CD8-positive, alpha-beta memory T cell (primary cell): ENCODE measurements at regions of chr17 and their contacts with region 1.

Region 1: GRCh38 chr17:8057691-8058114 is 18.8 kb downstream of the ALOX15B start:
- DNase-seq: peak; percentile 11 to 66 (median 63)
- H3K4me3 ChIP-seq: no peak overlapping the region
- H3K4me3 Mint-ChIP-seq: no peak overlapping the region
- H3K27ac ChIP-seq: no peak overlapping the region
- H3K27ac Mint-ChIP-seq: no peak overlapping the region
- H3K4me1 ChIP-seq: peaks cover 9% of the 10 kb centered on the region
- H3K4me1 Mint-ChIP-seq: peaks cover 12 to 22% (median 22%) of the 10 kb centered on the region in 3 donors
- H3K27me3 ChIP-seq: peaks cover 14% of the 10 kb centered on the region
- H3K27me3 Mint-ChIP-seq: peaks cover 21 to 50% of the 10 kb centered on the region in 2 donors

Region 2: GRCh38 chr17:7782237-7782636 is 275.5 kb before region 1 on chr17:
- CTCF ChIA-PET with region 1: no interaction called
- POLR2A ChIA-PET with region 1: no interaction called
- DNase-seq: no peak
- H3K4me3 ChIP-seq: no peak overlapping the region
- H3K4me3 Mint-ChIP-seq: no peak overlapping the region
- H3K27ac ChIP-seq: no peak overlapping the region
- H3K27ac Mint-ChIP-seq: no peak overlapping the region
- H3K4me1 ChIP-seq: no peaks in the 10 kb centered on the region
- H3K4me1 Mint-ChIP-seq: no peaks in the 10 kb centered on the region
- H3K27me3 ChIP-seq: no peaks in the 10 kb centered on the region
- H3K27me3 Mint-ChIP-seq: peaks cover 4 to 18% of the 10 kb centered on the region in 2 donors

Region 3: DNA sequence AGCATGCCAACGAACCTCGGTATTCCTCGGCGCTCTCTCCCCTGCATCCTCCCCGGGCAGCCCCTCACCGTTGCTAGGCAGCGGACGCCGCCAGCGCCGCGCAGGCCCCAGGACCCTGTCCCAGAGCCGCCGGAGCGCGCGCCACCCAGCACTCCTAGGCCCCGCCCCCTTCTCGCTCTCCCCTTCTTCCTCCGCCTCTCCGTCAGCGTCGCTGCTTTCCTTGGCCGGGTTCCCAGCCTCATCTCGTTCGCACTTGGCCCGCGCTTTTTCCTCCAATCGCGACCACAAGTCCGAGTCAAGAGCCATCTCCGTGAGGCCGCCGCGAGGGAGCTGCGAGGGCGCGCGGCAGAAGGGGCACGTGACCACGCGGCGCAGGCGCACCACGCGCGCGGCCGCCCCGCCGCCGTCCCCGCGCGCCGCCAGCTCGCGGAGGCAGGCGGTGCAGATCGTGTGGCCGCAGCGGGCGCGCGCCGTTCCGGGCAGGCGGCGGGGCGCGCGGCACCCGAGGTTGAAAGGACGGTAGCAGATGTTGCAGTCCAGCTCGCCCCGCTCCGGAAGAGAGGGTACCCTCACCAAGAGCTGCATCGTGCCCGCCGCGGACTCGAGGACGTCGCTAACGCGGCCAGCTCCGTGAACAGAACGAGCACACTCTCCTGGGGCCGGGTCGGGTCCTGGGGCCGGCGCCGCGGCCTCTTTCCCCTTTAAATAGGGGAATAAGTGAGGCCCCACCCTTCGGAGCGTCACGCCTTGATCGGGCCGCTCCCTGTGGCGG is 141.9 kb before region 1 on chr17 and contains the start of gene RNF227:
- CTCF ChIA-PET with region 1: interaction called, 11 read pairs
- POLR2A ChIA-PET with region 1: no interaction called
- DNase-seq: peak; percentile 72 to 89 (median 84)
- H3K4me3 ChIP-seq: peak within 1 kb of the TSS; percentile 75
- H3K4me3 Mint-ChIP-seq: peak within 1 kb of the TSS; percentile 78 to 95 (median 89)
- H3K27ac ChIP-seq: peak within 1 kb of the TSS; percentile 43
- H3K27ac Mint-ChIP-seq: peak within 1 kb of the TSS; percentile 83 to 98 (median 92)
- H3K4me1 ChIP-seq: peaks cover 30% of the 10 kb centered on the region
- H3K4me1 Mint-ChIP-seq: peaks cover 27 to 29% (median 29%) of the 10 kb centered on the region in 3 donors
- H3K27me3 ChIP-seq: no peaks in the 10 kb centered on the region
- H3K27me3 Mint-ChIP-seq: no peaks in the 10 kb centered on the region
- total RNA-seq, gene RNF227: 4.4 to 4.8 TPM

Region 4: GRCh38 chr17:8046306-8046928 is 11.3 kb before region 1 on chr17:
- CTCF ChIA-PET with region 1: interaction called, 13 read pairs
- POLR2A ChIA-PET with region 1: no interaction called
- DNase-seq: no peak
- H3K4me3 ChIP-seq: no peak overlapping the region
- H3K4me3 Mint-ChIP-seq: no peak overlapping the region
- H3K27ac ChIP-seq: no peak overlapping the region
- H3K27ac Mint-ChIP-seq: no peak overlapping the region
- H3K4me1 ChIP-seq: no peaks in the 10 kb centered on the region
- H3K4me1 Mint-ChIP-seq: peaks cover 0 to under 1% (median 0%) of the 10 kb centered on the region in 3 donors
- H3K27me3 ChIP-seq: no peaks in the 10 kb centered on the region
- H3K27me3 Mint-ChIP-seq: peaks cover 6 to 12% of the 10 kb centered on the region in 2 donors

Region 5: GRCh38 chr17:8079291-8080207 is 21.8 kb after region 1 on chr17:
- CTCF ChIA-PET with region 1: interaction called, 42 read pairs
- POLR2A ChIA-PET with region 1: no interaction called
- DNase-seq: peak; percentile 68 to 85 (median 72)
- H3K4me3 ChIP-seq: peak overlapping the region; percentile 78
- H3K4me3 Mint-ChIP-seq: peak overlapping the region; percentile 70 to 95 (median 92)
- H3K27ac ChIP-seq: peak overlapping the region; percentile 57
- H3K27ac Mint-ChIP-seq: peak overlapping the region; percentile 24 to 92 (median 84)
- H3K4me1 ChIP-seq: peaks cover 15% of the 10 kb centered on the region
- H3K4me1 Mint-ChIP-seq: peaks cover 4 to 20% (median 16%) of the 10 kb centered on the region in 3 donors
- H3K27me3 ChIP-seq: peaks cover 8% of the 10 kb centered on the region
- H3K27me3 Mint-ChIP-seq: peaks cover 7 to 10% of the 10 kb centered on the region in 2 donors

Region 6: DNA sequence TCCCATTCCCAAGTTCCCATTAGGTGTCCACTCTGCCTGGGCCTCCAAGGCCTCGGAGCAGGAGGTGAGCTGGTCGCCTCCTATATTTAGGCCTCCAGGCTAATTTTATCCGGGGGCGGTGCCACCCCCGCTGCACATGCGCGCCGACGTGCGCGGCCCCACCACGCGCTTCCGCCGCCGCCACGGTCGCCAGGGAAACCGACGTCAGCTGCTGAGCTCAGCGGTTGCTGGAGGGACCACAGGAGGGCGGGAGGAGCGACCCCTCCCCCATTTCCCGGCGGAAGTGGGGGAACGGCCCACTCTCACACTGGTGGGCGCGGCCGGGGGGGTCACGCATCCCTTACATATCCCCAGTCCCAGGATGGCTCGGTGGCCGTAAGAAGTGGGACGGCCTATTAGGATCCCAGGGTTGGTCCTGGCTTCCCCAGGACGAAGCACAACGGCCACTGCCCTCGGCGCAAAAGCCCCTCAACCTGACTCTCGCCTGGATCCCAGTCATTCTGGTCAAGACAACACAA is 93.5 kb after region 1 on chr17:
- CTCF ChIA-PET with region 1: no interaction called
- POLR2A ChIA-PET with region 1: no interaction called
- DNase-seq: peak; percentile 87 to 97 (median 95)
- H3K4me3 ChIP-seq: peak overlapping the region; percentile 60
- H3K4me3 Mint-ChIP-seq: peak overlapping the region in 4 of 7 donors; percentile 57 to 98 (median 95)
- H3K27ac ChIP-seq: peak overlapping the region; percentile 100
- H3K27ac Mint-ChIP-seq: peak overlapping the region in 3 of 8 donors; percentile 87 to 99 (median 91)
- H3K4me1 ChIP-seq: peaks cover 55% of the 10 kb centered on the region
- H3K4me1 Mint-ChIP-seq: peaks cover 19 to 68% (median 33%) of the 10 kb centered on the region in 3 donors
- H3K27me3 ChIP-seq: no peaks in the 10 kb centered on the region
- H3K27me3 Mint-ChIP-seq: peaks cover 0 to 20% of the 10 kb centered on the region in 2 donors

Region 7: DNA sequence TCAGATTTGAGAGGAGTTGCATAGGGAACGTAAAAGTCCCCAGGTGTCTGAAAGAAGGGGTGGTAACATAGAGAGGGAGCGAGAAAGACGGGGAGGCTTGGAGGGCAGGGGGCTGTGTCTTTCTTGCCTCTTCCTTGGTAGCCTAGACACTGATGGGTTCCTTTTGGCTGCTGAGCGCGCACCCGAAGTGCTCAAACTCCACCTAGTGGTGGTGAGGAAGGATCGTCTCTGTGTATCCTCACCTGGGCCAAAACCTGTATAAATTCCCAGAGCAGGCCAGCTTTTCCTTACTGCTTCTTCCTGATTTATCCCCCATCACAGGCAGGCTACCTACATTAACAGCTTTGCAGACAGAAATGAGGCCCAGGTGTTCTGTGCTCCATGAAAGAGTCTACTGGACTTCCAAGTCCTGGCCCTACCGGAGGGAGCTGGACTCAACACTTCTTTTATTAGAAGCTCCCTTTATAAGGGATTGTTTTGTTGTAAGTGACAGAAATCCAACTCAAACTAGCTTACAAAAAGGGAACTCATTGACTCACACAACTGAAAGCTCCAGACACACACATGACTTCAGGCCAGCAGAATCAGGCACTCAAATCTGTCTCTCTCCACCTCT is 243.0 kb after region 1 on chr17:
- CTCF ChIA-PET with region 1: interaction called, 10 read pairs
- POLR2A ChIA-PET with region 1: no interaction called
- DNase-seq: peak; percentile 43 to 79 (median 66)
- H3K4me3 ChIP-seq: no peak overlapping the region
- H3K4me3 Mint-ChIP-seq: peak overlapping the region in 1 of 7 donors; percentile 31
- H3K27ac ChIP-seq: no peak overlapping the region
- H3K27ac Mint-ChIP-seq: peak overlapping the region in 6 of 8 donors; percentile 4 to 86 (median 24)
- H3K4me1 ChIP-seq: peaks cover 10% of the 10 kb centered on the region
- H3K4me1 Mint-ChIP-seq: peaks cover 9 to 12% (median 11%) of the 10 kb centered on the region in 3 donors
- H3K27me3 ChIP-seq: no peaks in the 10 kb centered on the region
- H3K27me3 Mint-ChIP-seq: no peaks in the 10 kb centered on the region